PC-9 (cell line): ENCODE measurements at regions of chr4 and their contacts with region 1.

Region 1: GRCh38 chr4:48499551-48500066 is 9.6 kb downstream of the ZAR1 start:
- DNase-seq: no peak
- H3K4me3 ChIP-seq: no peak overlapping the region
- H3K27ac ChIP-seq: no peak overlapping the region
- H3K4me1 ChIP-seq: no peaks in the 10 kb centered on the region
- H3K27me3 ChIP-seq: no peaks in the 10 kb centered on the region
- CTCF ChIP-seq: no peak

Region 2: GRCh38 chr4:48518143-48518542 is 18.5 kb after region 1 on chr4:
- CTCF ChIA-PET with region 1: interaction called, 10 read pairs
- POLR2A ChIA-PET with region 1: no interaction called
- intact Hi-C with region 1: no loop called
- DNase-seq: no peak
- H3K4me3 ChIP-seq: no peak overlapping the region
- H3K27ac ChIP-seq: no peak overlapping the region
- H3K4me1 ChIP-seq: no peaks in the 10 kb centered on the region
- H3K27me3 ChIP-seq: no peaks in the 10 kb centered on the region
- CTCF ChIP-seq: no peak

Region 3: DNA sequence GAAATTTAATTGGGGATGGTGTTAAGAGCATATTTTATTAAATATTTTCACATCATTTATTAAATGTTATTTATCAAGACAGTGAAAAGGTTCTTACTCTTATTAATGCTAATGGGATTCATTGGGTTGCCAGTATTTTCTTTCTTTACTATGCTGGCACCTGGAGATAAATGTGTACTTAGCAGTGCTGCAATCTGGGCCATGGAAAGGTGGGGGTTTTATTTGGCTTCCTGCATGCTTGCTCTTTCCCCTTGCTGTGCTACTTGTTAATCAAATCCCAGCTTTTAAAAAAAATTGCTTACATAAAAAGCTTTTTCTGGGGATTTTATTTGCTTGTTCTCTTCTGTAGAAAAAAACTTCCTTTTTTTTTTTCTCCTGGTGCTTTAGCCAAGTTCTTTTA is 38.7 kb after region 1 on chr4:
- CTCF ChIA-PET with region 1: no interaction called
- POLR2A ChIA-PET with region 1: no interaction called
- intact Hi-C with region 1: no loop called
- DNase-seq: no peak
- H3K4me3 ChIP-seq: no peak overlapping the region
- H3K27ac ChIP-seq: no peak overlapping the region
- H3K4me1 ChIP-seq: no peaks in the 10 kb centered on the region
- H3K27me3 ChIP-seq: no peaks in the 10 kb centered on the region
- CTCF ChIP-seq: no peak